ENCODE measurements at regions of chr7 and their contacts with region 1.

Region 1: DNA sequence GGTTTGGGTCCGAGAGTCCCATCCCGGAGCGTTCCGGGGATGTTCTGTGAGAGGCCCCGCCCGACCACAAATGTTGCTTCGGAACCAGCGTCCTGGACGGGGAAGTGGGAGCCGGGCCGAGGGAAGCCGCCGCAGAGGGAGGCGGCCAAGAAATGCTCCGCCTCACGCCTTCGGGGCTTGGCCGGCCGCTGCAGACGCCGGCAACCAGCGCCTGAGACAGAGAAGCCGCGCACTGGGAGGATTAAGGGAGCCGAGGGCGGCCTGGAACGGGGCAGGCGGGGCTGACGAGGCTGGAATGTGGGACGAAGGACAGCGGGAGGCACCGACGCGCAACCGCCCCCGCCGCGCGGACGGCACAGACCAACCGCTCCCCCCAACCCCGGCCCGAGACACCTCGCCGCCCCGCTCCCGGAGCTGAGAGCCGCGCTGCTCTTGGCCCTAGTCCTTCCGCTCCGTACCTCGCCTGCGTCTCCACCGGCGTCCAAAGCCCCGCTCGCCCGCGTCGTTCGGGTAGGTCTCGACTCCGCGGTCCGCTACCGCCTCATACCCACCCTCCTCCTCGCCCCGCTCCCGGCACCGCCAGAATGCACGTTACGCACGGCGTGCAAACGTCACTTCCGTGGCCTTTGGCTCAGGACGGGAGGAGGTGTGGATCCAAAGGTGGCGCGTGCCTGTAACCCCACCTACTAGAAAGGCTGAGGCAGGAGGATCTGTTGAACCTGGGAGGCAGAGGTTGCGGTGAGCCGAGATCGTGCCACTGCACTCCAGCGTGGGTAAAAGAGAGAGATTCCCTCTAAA is 36.7 kb upstream of the KCTD7 start:
- DNase-seq: peak; percentile 80
- ATAC-seq: peak; percentile 98
- H3K4me3 Mint-ChIP-seq: peak overlapping the region; percentile 98
- H3K27ac Mint-ChIP-seq: peak overlapping the region; percentile 91
- H3K4me1 Mint-ChIP-seq: peaks cover 52% of the 10 kb centered on the region
- H3K27me3 Mint-ChIP-seq: no peaks in the 10 kb centered on the region
- CTCF ChIP-seq: no peak

Region 2: GRCh38 chr7:65750511-65751344 is 841.3 kb before region 1 on chr7:
- CTCF ChIA-PET with region 1: no interaction called
- POLR2A ChIA-PET with region 1: no interaction called
- intact Hi-C with region 1: loop called (anchors 1 kb)
- DNase-seq: peak; percentile 83
- ATAC-seq: peak; percentile 99
- H3K4me3 Mint-ChIP-seq: peak overlapping the region; percentile 96
- H3K27ac Mint-ChIP-seq: peak overlapping the region; percentile 94
- H3K4me1 Mint-ChIP-seq: peaks cover 15% of the 10 kb centered on the region
- H3K27me3 Mint-ChIP-seq: no peaks in the 10 kb centered on the region
- CTCF ChIP-seq: no peak

Region 3: GRCh38 chr7:66654123-66654732 is 62.2 kb after region 1 on chr7:
- CTCF ChIA-PET with region 1: no interaction called
- POLR2A ChIA-PET with region 1: interaction called, 4 read pairs
- intact Hi-C with region 1: loop called (anchors 1 kb)
- DNase-seq: peak; percentile 97
- ATAC-seq: peak; percentile 91
- H3K4me3 Mint-ChIP-seq: peak overlapping the region; percentile 94
- H3K27ac Mint-ChIP-seq: peak overlapping the region; percentile 96
- H3K4me1 Mint-ChIP-seq: peaks cover 30% of the 10 kb centered on the region
- H3K27me3 Mint-ChIP-seq: no peaks in the 10 kb centered on the region
- CTCF ChIP-seq: no peak

Region 4: GRCh38 chr7:66681491-66682349 is 89.7 kb after region 1 on chr7:
- CTCF ChIA-PET with region 1: no interaction called
- POLR2A ChIA-PET with region 1: interaction called, 4 read pairs
- intact Hi-C with region 1: loop called (anchors 1 kb)
- DNase-seq: peak; percentile 95
- ATAC-seq: peak; percentile 93
- H3K4me3 Mint-ChIP-seq: peak overlapping the region; percentile 89
- H3K27ac Mint-ChIP-seq: peak overlapping the region; percentile 89
- H3K4me1 Mint-ChIP-seq: peaks cover 48% of the 10 kb centered on the region
- H3K27me3 Mint-ChIP-seq: no peaks in the 10 kb centered on the region
- CTCF ChIP-seq: no peak

Region 5: DNA sequence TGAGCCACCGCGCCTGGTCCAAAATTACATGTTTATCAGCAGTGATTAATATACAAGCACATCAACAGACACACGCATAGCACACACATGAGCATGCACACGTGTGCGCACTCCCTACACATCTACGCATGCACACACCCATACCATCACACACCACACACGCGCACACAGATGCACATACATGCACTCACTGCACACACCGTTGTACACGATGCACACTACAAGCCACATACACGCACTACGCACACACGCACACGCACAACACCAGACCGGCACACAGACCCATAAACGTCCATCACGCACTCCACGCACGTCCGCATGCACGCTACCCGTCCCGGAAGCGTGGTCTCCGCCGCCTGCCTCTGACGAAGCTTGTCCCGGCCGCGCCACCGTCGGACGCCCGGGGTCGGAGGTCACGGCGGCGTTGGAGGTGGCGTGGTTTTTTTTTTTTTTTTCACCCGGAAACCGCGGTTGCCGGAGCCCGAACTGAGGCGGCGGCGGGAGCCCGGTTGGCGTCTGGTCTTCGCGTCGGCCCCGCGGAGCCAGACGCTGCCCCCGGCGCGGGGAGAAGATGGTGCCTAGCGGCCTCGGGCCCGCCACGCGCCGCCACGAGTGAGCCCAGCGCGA is 328.9 kb after region 1 on chr7 and contains the start of gene TMEM248:
- CTCF ChIA-PET with region 1: no interaction called
- POLR2A ChIA-PET with region 1: no interaction called
- intact Hi-C with region 1: loop called (anchors 1 kb)
- DNase-seq: peak; percentile 94
- ATAC-seq: peak; percentile 90
- H3K4me3 Mint-ChIP-seq: peak within 1 kb of the TSS; percentile 99
- H3K27ac Mint-ChIP-seq: peak within 1 kb of the TSS; percentile 92
- H3K4me1 Mint-ChIP-seq: peaks cover 34% of the 10 kb centered on the region
- H3K27me3 Mint-ChIP-seq: no peaks in the 10 kb centered on the region
- CTCF ChIP-seq: no peak
- total RNA-seq, gene TMEM248: 89.2 and 95.0 TPM in 2 replicates